ENCODE measurements at regions of chr10 and their contacts with region 1.

Region 1: GRCh38 chr10:70758757-70759514 is 26.2 kb downstream of the TBATA start:
- DNase-seq: peak; percentile 97
- ATAC-seq: peak; percentile 68
- H3K4me3 ChIP-seq: no peak overlapping the region
- H3K27ac ChIP-seq: no peak overlapping the region
- H3K4me1 ChIP-seq: peaks cover 8% of the 10 kb centered on the region
- H3K27me3 ChIP-seq: no peaks in the 10 kb centered on the region
- CTCF ChIP-seq: peak; percentile 92

Region 2: GRCh38 chr10:70461215-70461986 is 297.5 kb before region 1 on chr10:
- CTCF ChIA-PET with region 1: interaction called, 5 read pairs
- POLR2A ChIA-PET with region 1: no interaction called
- intact Hi-C with region 1: loop called (anchors 1 kb)
- DNase-seq: peak; percentile 89
- ATAC-seq: peak; percentile 65
- H3K4me3 ChIP-seq: no peak overlapping the region
- H3K27ac ChIP-seq: no peak overlapping the region
- H3K4me1 ChIP-seq: peaks cover 27% of the 10 kb centered on the region
- H3K27me3 ChIP-seq: 0 out of 2 replicates have a peak, but pooled peaks cover 1% of the 10 kb centered on the region
- CTCF ChIP-seq: peak; percentile 99

Region 3: DNA sequence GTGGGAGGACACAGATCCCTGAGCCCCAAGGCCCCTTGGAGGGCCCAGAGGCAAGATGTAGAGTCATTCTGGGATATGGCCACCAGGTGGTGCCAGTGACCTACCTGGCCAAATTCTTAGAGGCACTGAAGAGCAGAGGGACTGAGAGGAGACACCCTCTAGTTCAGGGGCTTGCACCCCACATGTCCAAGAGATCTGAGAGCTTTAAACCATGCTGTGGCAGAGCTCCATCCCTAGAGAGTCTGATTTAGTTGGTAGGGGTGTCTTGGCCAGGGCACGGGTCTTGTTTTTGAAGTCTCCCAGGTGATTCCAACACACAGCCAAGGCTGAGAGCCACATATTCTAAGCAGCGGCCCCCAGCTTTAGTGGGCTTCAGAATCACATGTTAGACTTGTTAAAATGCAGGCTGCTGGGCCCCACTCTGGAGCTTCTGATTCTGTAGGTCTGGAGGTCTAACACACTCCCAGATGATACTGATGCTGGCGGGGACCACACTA is 208.9 kb before region 1 on chr10:
- CTCF ChIA-PET with region 1: interaction called, 10 read pairs
- POLR2A ChIA-PET with region 1: no interaction called
- intact Hi-C with region 1: loop called (anchors 1 kb)
- DNase-seq: peak; percentile 91
- ATAC-seq: peak; percentile 95
- H3K4me3 ChIP-seq: no peak overlapping the region
- H3K27ac ChIP-seq: no peak overlapping the region
- H3K4me1 ChIP-seq: no peaks in the 10 kb centered on the region
- H3K27me3 ChIP-seq: no peaks in the 10 kb centered on the region
- CTCF ChIP-seq: peak; percentile 99

Region 4: DNA sequence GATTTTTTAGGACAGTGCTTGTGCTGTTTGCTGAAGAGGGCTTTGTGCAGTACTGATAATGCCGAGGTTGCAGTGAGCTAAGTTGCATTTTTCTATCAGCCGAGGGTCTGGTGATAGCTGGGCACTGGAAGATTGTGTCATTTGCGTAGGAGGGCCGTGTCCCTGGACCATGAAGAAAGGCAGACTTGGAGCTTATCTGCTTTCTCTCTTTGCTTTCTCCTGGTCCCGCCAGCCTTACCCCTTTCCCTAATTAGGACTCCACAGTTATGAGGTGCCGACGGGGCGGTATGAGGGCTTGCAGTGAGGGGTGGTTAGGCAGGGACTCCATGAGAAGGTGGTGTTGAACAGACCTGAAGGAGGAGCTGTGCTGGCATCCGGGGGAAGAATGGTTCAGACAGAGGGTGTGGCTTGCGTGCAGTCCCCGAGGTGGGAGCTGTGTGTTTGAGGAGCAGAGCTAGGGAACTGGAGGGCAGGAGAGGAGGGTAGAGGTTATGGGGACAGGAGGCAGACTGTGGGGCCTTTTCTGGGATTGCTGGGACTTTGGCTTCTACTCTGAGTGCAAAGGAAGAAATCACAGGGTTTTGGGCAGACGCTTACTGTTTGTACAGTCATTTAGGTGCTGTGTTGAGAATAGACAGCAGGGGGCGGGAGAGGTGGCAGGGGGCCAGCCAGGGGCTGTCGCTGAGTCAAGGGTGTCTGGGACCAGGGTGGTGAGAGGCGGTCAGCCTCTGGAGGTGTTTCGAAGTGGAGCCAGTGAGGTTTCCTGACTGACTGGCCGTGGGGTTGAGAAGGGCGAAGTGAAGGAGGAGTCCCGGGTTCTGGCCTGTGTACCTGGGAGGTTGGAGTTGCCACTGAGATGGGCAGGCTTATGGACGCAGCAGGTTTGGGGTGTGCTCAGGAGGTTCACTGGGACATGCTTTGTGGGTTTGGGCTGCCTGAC is 199.8 kb before region 1 on chr10:
- CTCF ChIA-PET with region 1: interaction called, 3 read pairs
- POLR2A ChIA-PET with region 1: no interaction called
- intact Hi-C with region 1: loop called (anchors 1 kb)
- DNase-seq: peak; percentile 91
- ATAC-seq: peak; percentile 88
- H3K4me3 ChIP-seq: peak overlapping the region; percentile 56
- H3K27ac ChIP-seq: no peak overlapping the region
- H3K4me1 ChIP-seq: no peaks in the 10 kb centered on the region
- H3K27me3 ChIP-seq: no peaks in the 10 kb centered on the region
- CTCF ChIP-seq: peak; percentile 96

Region 5: GRCh38 chr10:70619271-70620019 is 139.5 kb before region 1 on chr10:
- CTCF ChIA-PET with region 1: interaction called, 3 read pairs
- POLR2A ChIA-PET with region 1: no interaction called
- intact Hi-C with region 1: loop called (anchors 1 kb)
- DNase-seq: peak; percentile 80
- ATAC-seq: no peak
- H3K4me3 ChIP-seq: no peak overlapping the region
- H3K27ac ChIP-seq: no peak overlapping the region
- H3K4me1 ChIP-seq: peaks cover 36% of the 10 kb centered on the region
- H3K27me3 ChIP-seq: no peaks in the 10 kb centered on the region
- CTCF ChIP-seq: peak; percentile 90

Region 6: DNA sequence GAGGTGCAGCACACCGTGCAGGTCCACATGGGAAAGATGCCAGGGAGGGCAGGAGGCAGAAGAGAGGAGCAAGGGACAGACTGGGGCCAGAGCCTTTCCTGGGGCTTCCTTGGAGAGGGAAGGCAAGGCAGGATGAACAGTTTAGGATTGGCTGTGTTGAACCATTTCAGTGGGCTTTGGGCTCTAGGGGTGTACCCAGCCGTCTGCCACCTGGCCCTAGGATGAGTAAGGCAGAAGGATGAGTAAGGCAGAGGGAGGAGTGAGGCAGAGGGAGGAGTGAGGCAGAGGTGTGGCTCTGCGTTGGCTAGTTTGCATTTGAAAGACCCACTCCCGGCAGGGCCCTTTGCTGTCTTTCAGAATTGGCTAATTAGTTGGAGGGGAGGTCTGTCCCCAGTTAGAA is 124.9 kb before region 1 on chr10:
- CTCF ChIA-PET with region 1: no interaction called
- POLR2A ChIA-PET with region 1: no interaction called
- intact Hi-C with region 1: no loop called
- DNase-seq: no peak
- ATAC-seq: no peak
- H3K4me3 ChIP-seq: no peak overlapping the region
- H3K27ac ChIP-seq: no peak overlapping the region
- H3K4me1 ChIP-seq: peaks cover 7% of the 10 kb centered on the region; the same call in 1 of the 2 replicates
- H3K27me3 ChIP-seq: no peaks in the 10 kb centered on the region
- CTCF ChIP-seq: no peak

Region 7: DNA sequence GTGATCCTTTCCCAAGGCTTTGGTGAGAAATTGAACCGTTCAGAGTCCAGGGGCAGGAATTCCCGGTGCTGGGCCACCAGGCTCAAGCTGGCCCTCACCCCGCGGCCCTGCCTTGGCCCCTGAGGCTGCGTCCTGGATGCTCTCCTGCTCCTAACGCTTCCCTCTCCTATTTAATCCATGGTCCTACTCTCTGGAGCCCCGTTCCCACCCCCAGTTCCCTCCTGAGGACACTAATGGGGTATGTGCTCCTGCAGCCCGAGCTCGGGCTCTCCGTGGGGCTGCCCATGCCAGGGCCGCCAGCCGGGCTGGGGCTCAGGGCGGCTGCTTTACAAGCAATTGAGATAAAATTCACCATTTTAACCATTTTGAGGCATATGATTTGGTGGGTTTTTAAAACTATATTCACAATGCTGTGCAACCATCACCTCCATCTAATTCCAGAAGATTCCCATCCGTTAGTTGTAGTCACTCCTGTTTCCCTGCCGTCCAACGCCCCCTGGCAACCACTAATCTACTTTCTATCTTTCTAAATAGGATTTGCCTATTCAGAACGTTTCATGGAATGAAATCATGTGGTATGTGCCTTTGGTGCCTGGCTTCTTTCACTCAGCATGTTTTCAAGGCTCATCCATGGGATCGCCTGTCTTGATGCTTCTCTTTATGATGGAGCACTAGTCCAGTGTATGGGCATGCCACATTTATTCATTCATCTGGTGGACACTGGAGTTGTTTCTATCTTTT is 53.6 kb before region 1 on chr10:
- CTCF ChIA-PET with region 1: no interaction called
- POLR2A ChIA-PET with region 1: no interaction called
- intact Hi-C with region 1: no loop called
- DNase-seq: no peak
- ATAC-seq: no peak
- H3K4me3 ChIP-seq: no peak overlapping the region
- H3K27ac ChIP-seq: no peak overlapping the region
- H3K4me1 ChIP-seq: no peaks in the 10 kb centered on the region
- H3K27me3 ChIP-seq: no peaks in the 10 kb centered on the region
- CTCF ChIP-seq: no peak

Region 8: DNA sequence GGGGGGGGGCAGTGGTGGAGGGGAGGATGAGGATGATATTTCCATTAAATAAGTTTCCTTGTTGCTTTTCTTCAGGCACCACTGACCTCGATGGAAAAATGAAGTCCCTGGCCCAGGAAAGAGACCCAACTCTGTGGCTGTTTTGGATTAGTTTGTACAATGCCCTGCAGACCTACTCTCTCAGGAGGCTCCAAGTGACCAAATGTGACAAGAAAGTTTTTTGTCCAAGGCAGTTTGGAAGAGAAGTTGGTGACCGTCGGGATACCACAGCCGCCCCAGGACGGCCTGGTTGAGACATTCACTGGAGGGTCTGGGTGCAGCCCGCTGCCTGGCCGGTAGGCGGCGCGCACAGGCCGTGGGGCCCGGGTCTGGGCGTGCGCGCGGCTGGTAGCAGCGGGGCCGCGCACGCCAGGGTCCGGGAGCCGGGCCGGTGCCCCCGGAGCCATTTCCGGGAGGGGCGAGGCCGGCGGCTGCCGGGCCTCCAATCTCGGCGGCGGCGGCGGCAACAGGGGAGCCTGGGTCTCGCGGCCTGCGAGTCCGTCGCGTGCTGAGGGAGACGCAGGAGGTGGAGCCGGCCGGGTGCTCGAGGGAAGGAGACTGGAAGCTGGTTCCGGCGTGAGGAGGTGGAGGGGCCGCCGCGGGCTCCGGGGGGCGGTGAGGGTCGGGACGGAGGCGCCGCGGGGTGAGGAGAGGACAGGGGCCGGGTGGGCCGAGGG is 56.7 kb after region 1 on chr10 and contains the start of gene SGPL1:
- CTCF ChIA-PET with region 1: interaction called, 17 read pairs
- POLR2A ChIA-PET with region 1: no interaction called
- intact Hi-C with region 1: loop called (anchors 1 kb)
- DNase-seq: peak; percentile 98
- ATAC-seq: peak; percentile 63
- H3K4me3 ChIP-seq: peak within 1 kb of the TSS; percentile 89
- H3K27ac ChIP-seq: peak within 1 kb of the TSS; percentile 82
- H3K4me1 ChIP-seq: peaks cover 21% of the 10 kb centered on the region
- H3K27me3 ChIP-seq: no peaks in the 10 kb centered on the region
- CTCF ChIP-seq: peak; percentile 98
- total RNA-seq, gene SGPL1: 77.6 and 101 TPM in 2 replicates

Region 9: DNA sequence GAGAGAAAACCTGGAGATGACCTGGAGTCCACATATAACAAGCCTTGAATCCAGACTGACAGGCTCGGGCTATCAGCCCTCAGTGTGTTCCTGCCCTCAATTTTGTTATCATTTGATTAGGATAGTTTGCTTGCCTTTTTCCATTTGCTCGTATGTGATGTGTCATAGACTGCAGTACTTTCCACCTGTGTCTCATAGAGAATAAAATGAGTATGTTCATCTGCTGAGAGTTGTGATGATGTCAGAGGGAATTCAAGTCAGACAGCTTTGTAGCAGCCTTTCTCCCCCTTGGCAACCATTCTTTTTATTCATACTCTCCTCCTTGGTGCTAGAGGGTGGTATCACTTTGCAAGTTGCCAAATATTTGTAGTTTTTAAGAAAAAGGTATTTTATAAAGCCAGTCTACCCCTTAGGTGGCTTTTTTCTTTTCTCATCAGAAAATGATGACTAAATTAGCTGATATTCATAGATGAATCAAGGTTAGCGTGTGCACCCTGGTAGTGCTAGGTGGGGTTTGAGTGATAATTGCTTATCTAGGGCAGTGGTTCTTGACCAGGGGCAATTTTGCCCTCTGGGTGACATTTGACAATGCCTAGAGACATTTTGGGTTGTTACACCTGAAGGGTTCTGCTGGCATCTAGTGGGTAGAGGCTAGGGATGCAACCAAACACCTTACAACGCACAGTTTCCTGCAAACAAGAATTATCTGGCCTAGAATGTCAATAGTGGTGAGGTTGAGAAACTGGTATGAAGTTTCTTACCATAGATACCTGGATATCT is 62.2 kb after region 1 on chr10:
- CTCF ChIA-PET with region 1: interaction called, 17 read pairs
- POLR2A ChIA-PET with region 1: no interaction called
- intact Hi-C with region 1: loop called (anchors 1 kb)
- DNase-seq: peak; percentile 75
- ATAC-seq: peak; percentile 18; the same call in 1 of the 2 replicates
- H3K4me3 ChIP-seq: no peak overlapping the region
- H3K27ac ChIP-seq: peak overlapping the region; percentile 55
- H3K4me1 ChIP-seq: peaks cover 36% of the 10 kb centered on the region
- H3K27me3 ChIP-seq: no peaks in the 10 kb centered on the region
- CTCF ChIP-seq: peak; percentile 78

Measured in PC-3 (cell line).